Sigmoid colon (tissue), 7 donors: ENCODE measurements at regions of chr19 and their contacts with region 1.

Region 1: DNA sequence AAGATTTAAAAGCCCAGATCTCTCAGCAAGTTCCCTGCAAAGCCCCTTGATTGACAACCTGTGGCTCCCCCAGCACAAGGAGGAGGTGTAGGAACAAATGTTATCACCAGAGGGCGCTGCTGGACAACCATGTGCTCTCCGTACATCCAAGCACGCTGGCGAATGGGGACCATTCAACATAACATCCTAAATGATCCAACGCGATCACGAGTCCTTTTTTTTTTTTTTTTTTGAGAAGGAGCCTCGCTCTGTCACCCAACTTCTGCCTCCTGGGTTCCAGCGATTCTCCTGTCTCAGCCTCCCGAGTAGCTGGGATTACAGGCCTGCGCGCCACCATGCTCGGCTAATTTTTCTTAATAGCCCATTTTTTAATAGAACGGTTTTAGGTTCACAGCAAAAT is 52.0 kb downstream of the NWD1 start:
- DNase-seq: peak; percentile 88
- H3K4me3 ChIP-seq: no peak overlapping the region
- H3K27ac ChIP-seq: no peak overlapping the region
- H3K4me1 ChIP-seq: no peaks in the 10 kb centered on the region
- H3K27me3 ChIP-seq: peaks cover 0 to 8% (median 0%) of the 10 kb centered on the region in 3 donors
- CTCF ChIP-seq: peak; percentile 68 to 81 (median 74)
- EP300 ChIP-seq: no peak
- POLR2A ChIP-seq: no peak

Region 2: DNA sequence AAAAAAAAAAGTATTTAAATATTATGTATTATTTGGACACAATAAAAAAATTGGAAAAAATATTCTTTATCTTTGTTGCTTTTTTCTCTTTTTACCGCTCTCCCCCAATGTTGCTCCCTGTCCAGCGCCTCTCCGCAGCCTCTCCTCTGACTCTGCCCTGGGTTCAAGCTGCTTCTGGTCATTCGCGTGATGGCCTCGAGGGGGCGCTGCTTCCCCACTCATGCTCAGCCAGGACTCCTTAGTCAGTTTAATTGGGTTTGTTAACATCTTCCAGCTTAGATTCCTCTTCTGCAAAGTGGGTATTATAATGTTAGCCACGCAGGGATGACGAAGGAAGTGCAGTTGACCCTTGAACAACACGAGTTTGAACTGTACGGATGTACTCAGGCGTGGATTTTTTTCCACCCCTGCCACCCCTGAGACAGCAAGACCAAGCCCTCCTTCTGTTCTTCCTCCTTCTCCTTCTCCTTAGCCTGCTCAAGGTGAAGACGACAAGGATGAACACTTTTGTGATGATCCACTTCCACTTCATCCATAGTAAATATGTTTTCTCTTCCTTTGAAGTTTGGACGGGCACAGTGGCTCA is 56.8 kb before region 1 on chr19:
- intact Hi-C with region 1: loop called (anchors 10 kb)
- DNase-seq: no peak
- H3K4me3 ChIP-seq: no peak overlapping the region
- H3K27ac ChIP-seq: no peak overlapping the region
- H3K4me1 ChIP-seq: peaks cover 0 to 4% (median 0%) of the 10 kb centered on the region in 4 donors
- H3K27me3 ChIP-seq: no peaks in the 10 kb centered on the region
- CTCF ChIP-seq: peak; percentile 35 to 69 (median 65)
- EP300 ChIP-seq: no peak
- POLR2A ChIP-seq: no peak

Region 3: DNA sequence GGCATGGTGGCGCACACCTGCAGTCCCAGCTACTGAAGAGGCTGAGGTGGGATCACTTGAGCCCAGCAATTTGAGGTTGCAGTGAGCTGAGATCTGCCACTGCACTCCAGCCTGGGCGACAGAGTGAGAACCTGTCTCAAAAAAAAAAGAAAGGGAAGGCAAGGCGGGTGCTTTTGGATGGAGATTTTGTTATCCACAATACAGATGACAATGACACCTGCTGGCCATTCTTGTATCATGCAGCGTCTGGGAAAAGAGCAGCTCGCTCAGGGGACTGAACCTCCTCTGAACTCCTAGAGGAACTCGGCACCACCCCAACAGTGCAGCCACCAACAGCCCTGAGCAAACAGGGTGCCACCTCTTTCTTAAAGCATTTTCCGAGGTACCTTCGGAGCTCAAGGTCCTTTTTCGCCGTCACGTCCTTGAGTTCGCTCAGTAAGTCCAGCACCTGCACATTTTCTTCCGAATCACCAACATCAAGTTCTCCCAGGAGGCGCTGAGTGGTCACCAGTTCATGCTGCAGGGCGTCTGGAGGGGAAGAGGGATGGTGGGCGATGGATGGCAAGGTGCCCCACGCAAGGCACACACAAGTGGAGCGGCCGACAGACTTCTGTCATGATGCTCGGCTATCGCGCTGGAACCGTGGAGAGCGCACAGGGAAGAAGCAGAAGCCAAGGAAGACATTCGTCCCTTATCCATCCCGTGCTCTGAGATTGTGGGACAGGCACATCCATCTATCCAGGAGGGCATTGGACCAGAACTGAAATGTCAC is 281.0 kb after region 1 on chr19:
- intact Hi-C with region 1: loop called (anchors 2 kb)
- DNase-seq: no peak
- H3K4me3 ChIP-seq: no peak overlapping the region
- H3K27ac ChIP-seq: no peak overlapping the region
- H3K4me1 ChIP-seq: no peaks in the 10 kb centered on the region
- H3K27me3 ChIP-seq: no peaks in the 10 kb centered on the region
- CTCF ChIP-seq: peak in 3 of 4 experiments; percentile 29 to 59 (median 49)
- EP300 ChIP-seq: no peak
- POLR2A ChIP-seq: no peak